GM13976 (cell line): ENCODE measurements at regions of chr4 and their contacts with region 1.

Region 1: DNA sequence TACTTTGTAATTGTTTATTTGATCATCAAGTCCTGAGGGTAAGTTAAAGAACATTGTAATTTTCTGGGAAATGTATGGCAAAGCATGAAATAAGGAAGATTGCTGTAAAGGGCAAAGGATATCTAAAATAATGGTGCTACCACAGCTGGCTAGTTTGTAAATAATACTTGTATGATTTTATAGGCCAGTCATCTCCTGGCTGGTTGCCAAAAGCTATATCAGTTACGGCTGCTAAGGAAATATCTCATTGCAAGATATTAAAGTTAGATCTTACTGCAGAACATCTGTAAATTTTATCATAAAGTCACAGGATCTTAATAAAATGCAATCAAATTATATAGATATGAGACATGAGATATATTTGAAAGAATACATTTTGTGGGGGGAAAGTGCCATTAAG is 150.8 kb upstream of the CXCL13 start:
- DNase-seq: no peak
- CTCF ChIP-seq: no peak

Region 2: GRCh38 chr4:77600521-77601451 is 145.9 kb after region 1 on chr4:
- in situ Hi-C with region 1: loop called (anchors 10 kb)
- DNase-seq: peak; percentile 36
- CTCF ChIP-seq: peak; percentile 72

Region 3: GRCh38 chr4:78002261-78002660 is 547.4 kb after region 1 on chr4:
- in situ Hi-C with region 1: no loop called
- DNase-seq: no peak
- CTCF ChIP-seq: no peak